Ovary (tissue), 10 donors: ENCODE measurements at regions of chr2 and their contacts with region 1.

Region 1: DNA sequence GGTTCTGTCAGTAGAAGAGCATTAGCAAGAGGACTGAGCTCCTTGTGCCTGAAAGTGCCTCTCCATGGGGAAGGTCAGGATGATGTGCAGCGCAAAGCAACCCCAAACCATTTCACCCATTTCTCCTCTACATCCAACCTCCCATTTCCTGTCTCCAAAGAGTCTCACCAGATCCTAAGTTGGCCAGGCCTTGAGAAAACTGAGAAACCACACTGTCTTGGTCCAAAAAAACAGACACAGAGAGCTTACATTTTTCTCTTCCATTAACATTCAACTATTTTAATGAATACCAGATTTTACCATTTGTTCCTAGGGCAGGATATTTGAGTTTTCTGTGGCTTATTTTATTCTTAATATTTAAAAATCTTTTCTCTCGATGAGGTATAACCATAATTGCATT is 195.0 kb downstream of the EPHA4 start:
- DNase-seq: no peak
- H3K4me3 ChIP-seq: no peak overlapping the region
- H3K27ac ChIP-seq: no peak overlapping the region
- H3K4me1 ChIP-seq: no peaks in the 10 kb centered on the region
- H3K27me3 ChIP-seq: no peaks in the 10 kb centered on the region
- CTCF ChIP-seq: no peak
- EP300 ChIP-seq: no peak
- POLR2A ChIP-seq: no peak

Region 2: DNA sequence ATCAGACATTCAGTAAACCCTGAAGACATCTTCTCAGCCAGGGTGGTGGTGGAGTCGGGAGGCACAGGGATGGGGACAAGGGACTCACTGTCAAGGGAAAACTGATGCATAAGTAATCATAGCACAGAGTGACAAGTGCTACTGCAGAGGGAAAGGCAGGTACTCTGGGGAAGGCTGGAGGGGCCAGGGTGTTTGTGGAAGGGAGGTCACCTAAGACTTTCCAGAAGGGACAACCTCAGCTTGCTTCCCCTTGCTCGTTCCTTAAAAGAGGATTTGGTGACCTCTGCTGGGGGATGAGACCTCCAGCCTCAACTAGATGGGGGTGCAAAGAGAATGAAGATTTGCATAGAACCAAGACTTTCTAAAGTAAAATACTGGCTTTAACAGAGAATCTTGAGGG is 1650.2 kb before region 1 on chr2:
- intact Hi-C with region 1: loop called in 1 of 4 experiments (anchors 5 kb)
- DNase-seq: no peak
- H3K4me3 ChIP-seq: no peak overlapping the region
- H3K27ac ChIP-seq: no peak overlapping the region
- H3K4me1 ChIP-seq: peaks cover 6% of the 10 kb centered on the region
- H3K27me3 ChIP-seq: no peaks in the 10 kb centered on the region
- CTCF ChIP-seq: no peak
- EP300 ChIP-seq: no peak
- POLR2A ChIP-seq: no peak